ENCODE measurements at regions of chr16 and their contacts with region 1.

Region 1: DNA sequence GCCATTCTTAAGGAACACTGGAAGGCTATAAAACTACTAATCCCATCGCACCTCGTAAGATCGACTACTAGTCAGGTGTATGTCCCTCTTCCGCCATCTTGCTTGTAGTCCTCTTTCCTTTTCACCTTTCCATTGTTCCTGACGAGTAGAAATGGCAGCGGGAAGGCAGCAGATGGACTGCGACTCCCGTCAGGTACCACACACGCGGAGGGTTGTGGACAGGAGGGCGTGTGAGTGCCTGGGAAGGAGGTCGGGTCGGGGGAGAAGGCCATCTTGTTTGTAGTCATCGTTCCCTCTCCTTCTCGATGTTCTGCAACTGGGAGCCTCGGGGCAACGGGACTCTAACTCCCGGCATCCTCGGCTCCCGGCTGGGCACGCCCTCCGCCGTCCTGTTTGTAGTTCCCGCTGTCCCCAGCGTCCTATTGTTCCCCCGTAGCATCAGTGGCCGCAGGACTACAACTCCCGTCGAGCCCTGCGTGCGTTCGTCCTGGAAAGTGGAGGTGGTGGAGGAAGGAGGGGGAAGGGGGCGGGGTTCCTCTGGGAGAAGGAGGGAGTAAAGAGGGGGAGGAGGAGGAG is 324 bp upstream of the FBXL19 start:
- DNase-seq: peak; percentile 99
- ATAC-seq: peak; percentile 76
- H3K4me3 ChIP-seq: peak overlapping the region; percentile 62 to 97
- H3K27ac ChIP-seq: peak overlapping the region; percentile 92
- H3K4me1 ChIP-seq: peaks cover 11 to 25% of the 10 kb centered on the region in 2 experiments; a peak in 3 of 4 replicates
- H3K27me3 ChIP-seq: no peaks in the 10 kb centered on the region
- CTCF ChIP-seq: no peak
- POLR2A ChIP-seq: peak; percentile 26
- RAD21 ChIP-seq: no peak

Region 2: DNA sequence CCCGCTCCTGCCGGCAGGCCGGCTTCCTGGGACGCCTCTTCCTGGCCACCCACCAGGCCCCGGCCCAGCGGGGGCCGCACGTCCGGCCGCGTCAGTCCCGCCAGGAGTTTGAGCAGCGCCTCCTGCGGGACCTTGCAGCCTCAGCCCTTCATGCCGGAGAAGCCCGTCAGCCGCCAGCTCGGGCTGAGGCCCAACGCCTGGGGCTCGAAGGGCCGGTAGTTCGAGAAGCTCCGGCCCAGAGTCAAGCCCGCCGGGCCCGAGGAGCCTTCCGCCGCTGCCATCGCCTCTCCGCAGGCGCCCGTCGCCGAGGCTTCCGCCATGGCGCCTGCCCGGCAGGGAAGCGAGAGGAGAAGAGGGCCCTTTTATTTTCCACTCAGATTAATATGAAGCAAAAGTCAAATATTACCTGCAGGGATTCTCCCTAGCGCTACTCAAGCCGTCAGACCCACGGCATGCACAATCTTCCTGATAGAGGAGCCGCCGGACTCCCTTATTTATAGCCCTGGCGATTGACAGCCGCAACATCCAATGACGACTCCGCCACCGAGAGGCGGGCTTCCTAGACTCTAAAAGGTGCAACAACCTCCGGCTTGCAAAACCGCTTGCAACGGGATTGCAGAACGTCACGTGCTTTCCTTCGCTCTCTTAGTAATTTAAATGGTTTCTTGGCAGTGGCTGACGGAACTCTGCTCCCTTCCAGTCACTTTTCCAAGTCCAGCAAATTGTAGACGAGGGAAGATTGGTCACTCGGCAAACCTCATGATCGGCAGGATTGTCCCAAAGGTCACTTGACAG is 477.4 kb before region 1 on chr16 and contains the start of gene SEPHS2:
- CTCF ChIA-PET with region 1: no interaction called
- POLR2A ChIA-PET with region 1: no interaction called
- RAD21 ChIA-PET with region 1: no interaction called
- intact Hi-C with region 1: loop called (anchors 5 kb)
- DNase-seq: peak; percentile 96
- ATAC-seq: peak; percentile 92
- H3K4me3 ChIP-seq: peak within 1 kb of the TSS; percentile 80 to 90
- H3K27ac ChIP-seq: peak within 1 kb of the TSS; percentile 86
- H3K4me1 ChIP-seq: peaks cover 5 to 20% of the 10 kb centered on the region in 2 experiments
- H3K27me3 ChIP-seq: no peaks in the 10 kb centered on the region
- CTCF ChIP-seq: peak in 2 of 3 experiments; percentile 50 to 52; a peak in 5 of 6 replicates
- POLR2A ChIP-seq: peak; percentile 98
- RAD21 ChIP-seq: 0 out of 2 replicates have a peak, but pooled peaks have one; percentile 23
- total RNA-seq, gene SEPHS2: 51.3 TPM

Region 3: GRCh38 chr16:30698139-30698815 is 224.8 kb before region 1 on chr16:
- CTCF ChIA-PET with region 1: no interaction called
- POLR2A ChIA-PET with region 1: no interaction called
- RAD21 ChIA-PET with region 1: no interaction called
- intact Hi-C with region 1: loop called (anchors 1 kb)
- DNase-seq: peak; percentile 95
- ATAC-seq: peak; percentile 75
- H3K4me3 ChIP-seq: peak overlapping the region; percentile 94 to 95
- H3K27ac ChIP-seq: peak overlapping the region; percentile 100
- H3K4me1 ChIP-seq: peaks cover 13 to 27% of the 10 kb centered on the region in 2 experiments
- H3K27me3 ChIP-seq: no peaks in the 10 kb centered on the region
- CTCF ChIP-seq: no peak
- POLR2A ChIP-seq: no peak
- RAD21 ChIP-seq: no peak

Region 4: GRCh38 chr16:30813821-30814189 is 109.2 kb before region 1 on chr16:
- CTCF ChIA-PET with region 1: no interaction called
- POLR2A ChIA-PET with region 1: no interaction called
- RAD21 ChIA-PET with region 1: no interaction called
- intact Hi-C with region 1: loop called (anchors 2 kb)
- DNase-seq: no peak
- ATAC-seq: no peak
- H3K4me3 ChIP-seq: peak overlapping the region; percentile 57 to 58
- H3K27ac ChIP-seq: peak overlapping the region; percentile 45
- H3K4me1 ChIP-seq: peaks cover 10 to 16% of the 10 kb centered on the region in 2 experiments
- H3K27me3 ChIP-seq: no peaks in the 10 kb centered on the region
- CTCF ChIP-seq: no peak
- POLR2A ChIP-seq: no peak
- RAD21 ChIP-seq: no peak

Region 5: DNA sequence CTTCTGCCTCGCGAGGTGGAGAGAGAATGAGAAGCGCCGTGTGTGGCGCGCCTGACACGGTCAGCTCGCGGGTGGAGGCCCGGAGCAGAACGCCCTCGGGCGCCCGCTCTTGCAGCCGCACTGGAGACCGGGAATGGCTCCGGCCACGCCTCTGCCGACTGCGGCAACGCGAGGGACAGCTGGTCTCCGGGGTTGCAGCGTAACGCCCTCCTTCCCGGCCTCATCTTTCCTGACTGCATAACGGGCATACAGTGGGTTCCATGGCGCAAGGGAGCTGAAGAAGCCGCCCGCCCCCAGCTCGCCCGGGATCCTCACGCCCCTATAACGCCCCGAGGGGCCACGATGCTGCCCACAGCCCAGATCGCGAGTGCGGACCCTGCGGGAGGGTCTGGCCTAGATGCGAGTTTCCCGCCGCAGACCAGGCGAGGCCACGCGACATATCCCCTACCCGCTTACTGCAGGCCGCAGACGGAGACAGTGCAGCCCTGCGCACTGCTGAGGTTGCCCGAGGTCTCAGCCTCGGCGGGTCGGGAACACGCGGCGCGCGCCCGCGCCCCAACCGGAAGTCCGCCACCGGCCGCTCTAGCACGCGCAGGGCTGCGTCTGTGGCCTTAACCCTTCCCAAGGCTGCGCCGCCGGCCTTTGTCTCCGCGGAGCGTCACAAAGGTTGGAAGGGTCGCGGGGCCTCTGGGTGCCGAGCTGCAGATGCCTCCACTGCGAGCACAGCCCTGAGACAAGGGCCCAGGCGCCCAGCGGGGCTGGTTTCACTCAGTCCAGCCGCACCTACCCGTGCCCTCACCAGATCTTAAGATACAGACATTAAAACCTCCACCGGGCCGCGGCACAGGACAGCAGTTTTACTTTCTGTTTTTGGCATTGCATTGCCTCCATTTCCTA is 48.0 kb before region 1 on chr16:
- CTCF ChIA-PET with region 1: no interaction called
- POLR2A ChIA-PET with region 1: no interaction called
- RAD21 ChIA-PET with region 1: no interaction called
- intact Hi-C with region 1: loop called (anchors 1 kb)
- DNase-seq: peak; percentile 74
- ATAC-seq: peak; percentile 91
- H3K4me3 ChIP-seq: peak overlapping the region; percentile 87 to 89
- H3K27ac ChIP-seq: peak overlapping the region; percentile 97
- H3K4me1 ChIP-seq: peaks cover 0 to 26% of the 10 kb centered on the region in 2 experiments; a peak in 3 of 4 replicates
- H3K27me3 ChIP-seq: no peaks in the 10 kb centered on the region
- CTCF ChIP-seq: no peak
- POLR2A ChIP-seq: peak; percentile 96
- RAD21 ChIP-seq: peak; percentile 18; the same call in 1 of the 2 replicates

Region 6: GRCh38 chr16:30941600-30942425 is 18.8 kb after region 1 on chr16:
- CTCF ChIA-PET with region 1: interaction called, 10 read pairs
- POLR2A ChIA-PET with region 1: interaction called, 4 read pairs
- RAD21 ChIA-PET with region 1: no interaction called
- intact Hi-C with region 1: no loop called
- DNase-seq: peak; percentile 46
- ATAC-seq: peak; percentile 98
- H3K4me3 ChIP-seq: no peak overlapping the region
- H3K27ac ChIP-seq: peak overlapping the region; percentile 38; the same call in 1 of the 2 replicates
- H3K4me1 ChIP-seq: peaks cover 5 to 12% of the 10 kb centered on the region in 2 experiments; a peak in 3 of 4 replicates
- H3K27me3 ChIP-seq: no peaks in the 10 kb centered on the region
- CTCF ChIP-seq: peak in 2 of 3 experiments; percentile 90 to 98; a peak in 5 of 6 replicates
- POLR2A ChIP-seq: no peak
- RAD21 ChIP-seq: peak; percentile 84

Region 7: DNA sequence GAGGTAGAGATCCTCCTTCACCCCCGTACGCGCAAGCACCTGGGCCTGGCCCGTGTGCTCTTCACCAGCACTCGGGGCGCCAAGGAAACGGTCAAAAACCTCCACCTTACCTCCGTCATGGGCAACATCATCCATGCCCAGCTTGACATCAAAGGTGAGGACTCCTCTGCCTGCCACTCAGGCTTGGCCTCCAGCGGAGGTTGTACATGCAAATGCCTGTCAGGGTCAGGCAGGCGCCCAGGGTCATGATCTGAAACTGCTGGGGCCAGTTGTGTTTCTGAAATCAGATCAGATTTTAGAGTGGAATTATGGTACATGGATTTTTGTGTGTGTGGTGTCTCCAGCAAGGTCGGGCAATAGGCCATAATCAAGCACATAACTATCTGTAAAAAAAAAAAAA is 38.3 kb after region 1 on chr16:
- CTCF ChIA-PET with region 1: no interaction called
- POLR2A ChIA-PET with region 1: no interaction called
- RAD21 ChIA-PET with region 1: no interaction called
- intact Hi-C with region 1: no loop called
- DNase-seq: no peak
- ATAC-seq: no peak
- H3K4me3 ChIP-seq: no peak overlapping the region
- H3K27ac ChIP-seq: no peak overlapping the region
- H3K4me1 ChIP-seq: peaks cover 15 to 20% of the 10 kb centered on the region in 2 experiments
- H3K27me3 ChIP-seq: no peaks in the 10 kb centered on the region
- CTCF ChIP-seq: no peak
- POLR2A ChIP-seq: no peak
- RAD21 ChIP-seq: no peak